ENCODE measurements at regions of chr10 and their contacts with region 1.

Region 1: DNA sequence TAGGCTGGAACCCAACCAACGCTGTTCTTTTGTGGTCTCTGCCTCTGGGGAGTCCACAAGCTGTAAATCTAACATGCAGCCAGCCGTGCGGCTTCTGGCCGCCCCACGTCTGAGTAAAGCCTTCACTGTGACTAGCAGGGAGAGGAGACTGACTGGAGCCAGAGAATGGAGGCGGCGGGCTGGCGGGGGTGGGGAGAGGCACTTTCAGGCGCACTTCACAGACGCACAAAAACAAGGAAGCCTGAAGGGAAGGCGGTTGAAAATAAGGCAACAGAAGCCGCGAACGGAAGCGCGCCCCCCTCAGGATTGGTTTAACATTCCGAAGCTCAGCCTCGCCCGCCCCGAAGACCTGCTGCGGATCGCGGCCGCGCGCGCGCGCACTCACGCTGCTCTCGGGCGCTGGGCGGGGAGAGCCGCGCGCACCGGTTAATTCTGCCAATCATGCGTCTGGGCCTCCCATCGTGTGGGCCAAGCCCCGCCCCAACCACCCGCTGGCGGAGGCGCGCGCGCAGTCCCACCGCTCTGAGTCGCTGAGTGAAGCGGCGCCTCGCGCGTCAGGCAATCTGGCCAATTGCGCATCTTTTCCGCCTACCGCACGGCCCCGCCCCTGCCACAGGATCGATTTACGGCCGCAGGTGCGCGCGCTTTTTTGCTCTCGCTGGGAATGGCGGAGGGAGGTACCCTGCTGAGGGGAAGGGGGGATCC is at the start of gene SFR1:
- DNase-seq: peak; percentile 95 to 99
- H3K4me3 ChIP-seq: peak within 1 kb of the TSS; percentile 66 to 70
- H3K27ac ChIP-seq: peak within 1 kb of the TSS; percentile 97 to 98
- H3K4me1 ChIP-seq: peaks cover 0 to 17% of the 10 kb centered on the region in 2 donors
- H3K27me3 ChIP-seq: no peaks in the 10 kb centered on the region
- CTCF ChIP-seq: peak; percentile 53 to 62 (median 53)
- total RNA-seq, gene SFR1: 0.32 TPM

Region 2: DNA sequence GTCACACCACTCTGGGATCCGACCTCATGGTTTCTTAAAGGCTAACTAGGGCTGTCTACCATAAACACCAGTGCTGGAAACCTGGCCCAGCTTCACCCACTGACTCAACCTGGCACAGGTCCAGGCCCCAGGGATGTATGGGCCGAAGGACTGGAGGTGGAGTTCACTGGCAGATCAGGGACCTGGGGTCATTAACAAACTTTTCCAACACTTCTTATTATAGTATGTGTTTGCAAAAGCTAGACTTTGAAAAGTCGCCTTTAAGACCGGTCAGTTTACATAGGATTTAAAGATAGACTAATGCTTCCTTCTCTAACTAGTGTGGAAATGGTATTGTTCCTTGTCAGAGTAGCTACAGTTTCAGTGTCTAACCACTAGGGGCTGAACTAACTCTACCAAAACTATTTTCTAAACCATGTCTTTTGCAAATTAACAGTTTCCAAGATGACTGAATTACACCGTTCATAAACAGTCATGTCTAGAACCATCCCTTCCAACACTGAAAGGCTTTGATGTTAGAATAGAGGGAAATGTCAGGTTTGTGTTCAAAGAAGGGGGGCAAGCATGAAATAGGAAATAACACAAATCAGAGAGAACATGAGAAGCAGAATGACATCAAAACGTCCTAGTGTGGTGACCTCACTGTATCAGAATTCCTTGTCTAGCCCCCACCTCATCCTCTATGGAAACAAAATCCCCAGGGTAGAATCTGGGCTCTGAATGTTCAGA is 233.4 kb before region 1 on chr10:
- intact Hi-C with region 1: loop called (anchors 1 kb)
- DNase-seq: peak; percentile 69 to 95
- H3K4me3 ChIP-seq: no peak overlapping the region
- H3K27ac ChIP-seq: peak overlapping the region; percentile 68 to 92
- H3K4me1 ChIP-seq: peaks cover 12 to 20% of the 10 kb centered on the region in 2 donors
- H3K27me3 ChIP-seq: no peaks in the 10 kb centered on the region
- CTCF ChIP-seq: peak; percentile 82 to 89 (median 88)

Region 3: DNA sequence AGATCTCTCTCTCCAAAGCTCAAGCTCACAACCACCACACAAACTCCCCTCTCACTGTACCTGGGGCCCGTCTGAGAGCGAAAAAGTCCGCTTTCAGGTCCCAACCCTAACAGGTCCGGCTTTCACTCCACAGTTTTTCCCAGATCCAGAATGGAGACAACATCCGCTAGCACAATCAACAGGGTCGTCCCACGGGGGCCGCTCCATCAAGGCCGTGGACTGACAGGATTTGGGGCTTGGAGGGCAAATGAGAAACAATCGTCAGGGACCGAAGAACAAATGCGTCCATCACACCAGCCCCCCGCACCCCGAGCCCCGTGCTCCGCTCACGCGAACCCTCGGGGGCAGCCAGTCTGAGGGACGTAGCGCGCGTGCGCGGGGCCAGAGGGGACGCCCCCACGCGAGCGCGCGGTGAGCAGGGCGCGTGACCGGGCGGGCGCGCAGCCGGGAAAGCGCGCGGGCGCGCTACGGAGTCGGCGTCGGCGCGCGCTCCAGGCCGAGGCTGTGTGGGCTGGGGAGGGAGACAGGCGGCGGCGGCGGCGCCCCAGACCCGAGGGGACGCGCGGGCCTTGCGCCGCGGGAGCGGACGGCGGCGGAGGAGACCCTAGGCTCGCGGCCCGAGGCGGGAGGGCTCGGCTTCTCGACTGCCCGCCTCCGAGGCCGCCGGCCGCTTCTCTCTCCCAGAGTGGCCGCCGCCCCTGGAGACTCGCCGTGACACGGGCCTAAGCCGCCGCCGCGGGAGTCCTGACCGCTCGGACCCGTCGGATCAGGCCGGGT is 154.8 kb before region 1 on chr10 and contains the start of gene SLK:
- intact Hi-C with region 1: loop called (anchors 1 kb)
- DNase-seq: peak; percentile 16 to 86
- H3K4me3 ChIP-seq: peak within 1 kb of the TSS; percentile 87 to 100
- H3K27ac ChIP-seq: peak within 1 kb of the TSS; percentile 91 to 99
- H3K4me1 ChIP-seq: peaks cover 0 to 13% of the 10 kb centered on the region in 2 donors
- H3K27me3 ChIP-seq: no peaks in the 10 kb centered on the region
- CTCF ChIP-seq: peak in 1 of 3 experiments; percentile 10
- total RNA-seq, gene SLK: 26.1 TPM

Region 4: GRCh38 chr10:104054430-104054829 is 67.2 kb before region 1 on chr10:
- intact Hi-C with region 1: no loop called
- DNase-seq: no peak
- H3K4me3 ChIP-seq: no peak overlapping the region
- H3K27ac ChIP-seq: no peak overlapping the region
- H3K4me1 ChIP-seq: no peaks in the 10 kb centered on the region
- H3K27me3 ChIP-seq: no peaks in the 10 kb centered on the region
- CTCF ChIP-seq: no peak

Region 5: DNA sequence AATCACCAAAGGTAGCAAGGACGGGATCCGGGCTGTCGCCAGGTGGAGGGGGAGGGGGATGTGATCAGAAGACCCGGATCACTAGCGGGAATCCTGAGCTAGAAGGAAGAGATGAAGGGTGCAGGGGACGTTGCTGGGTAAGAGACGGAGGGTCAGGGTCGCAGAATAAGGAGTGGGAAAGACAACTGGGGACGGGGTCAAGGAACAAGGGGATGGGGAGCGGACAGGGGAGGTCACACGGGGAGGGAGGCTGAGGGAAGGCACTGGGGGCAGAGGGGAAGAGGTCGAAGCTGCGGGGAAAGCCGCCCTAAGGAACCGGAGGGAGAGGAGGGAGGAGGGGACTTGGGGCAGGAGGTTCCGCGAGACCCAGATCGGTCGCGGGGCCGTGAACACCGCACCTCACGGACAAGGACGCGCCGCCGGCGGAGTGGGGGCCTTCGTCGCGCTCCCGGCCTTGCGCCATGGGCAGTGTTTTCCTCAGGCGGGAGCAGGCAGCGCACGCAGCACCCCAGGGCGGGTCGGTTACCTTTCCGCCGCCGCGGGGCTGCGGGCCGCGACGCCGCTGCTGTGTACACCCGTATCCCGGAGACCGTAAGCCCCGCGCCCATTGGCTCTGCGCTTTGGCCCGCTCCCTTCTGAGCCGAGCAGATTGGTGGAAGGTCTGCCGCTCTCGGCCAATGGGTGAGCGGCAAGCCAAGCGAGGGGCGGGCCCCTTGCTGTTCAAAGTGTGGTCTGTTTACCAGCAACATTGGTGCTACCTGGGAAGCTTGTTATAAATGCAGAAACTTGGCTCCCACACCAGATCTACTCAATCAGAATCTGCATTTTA is 110.3 kb after region 1 on chr10 and contains the start of gene CFAP43:
- intact Hi-C with region 1: loop called (anchors 1 kb)
- DNase-seq: peak; percentile 92 to 99
- H3K4me3 ChIP-seq: peak within 1 kb of the TSS; percentile 71 to 88
- H3K27ac ChIP-seq: no peak within 1 kb of the TSS
- H3K4me1 ChIP-seq: peaks cover 0 to 7% of the 10 kb centered on the region in 2 donors
- H3K27me3 ChIP-seq: no peaks in the 10 kb centered on the region
- CTCF ChIP-seq: no peak
- total RNA-seq, gene CFAP43: 0.96 TPM

Region 6: GRCh38 chr10:104353325-104354048 is 231.8 kb after region 1 on chr10 and contains the start of gene CFAP58:
- intact Hi-C with region 1: loop called (anchors 5 kb)
- DNase-seq: peak; percentile 89 to 97
- H3K4me3 ChIP-seq: peak within 1 kb of the TSS; percentile 50 to 66
- H3K27ac ChIP-seq: no peak within 1 kb of the TSS
- H3K4me1 ChIP-seq: peaks cover 2 to 12% of the 10 kb centered on the region in 2 donors
- H3K27me3 ChIP-seq: no peaks in the 10 kb centered on the region
- CTCF ChIP-seq: peak; percentile 64 to 75 (median 70)
- total RNA-seq, gene CFAP58: not detected